Activated B cell treated with CpG ODN at 0.5 μM for 24 hours (primary cell): ENCODE measurements at regions of chr14 and their contacts with region 1.

Region 1: GRCh38 chr14:95662376-95663186 is 23.6 kb upstream of the TCL1B start:
- DNase-seq: no peak
- ATAC-seq: peak; percentile 16
- H3K4me3 Mint-ChIP-seq: peak overlapping the region; percentile 45
- H3K27ac Mint-ChIP-seq: peak overlapping the region; percentile 90
- H3K4me1 Mint-ChIP-seq: peaks cover 92% of the 10 kb centered on the region
- H3K27me3 Mint-ChIP-seq: peaks cover 29% of the 10 kb centered on the region
- CTCF ChIP-seq: no peak

Region 2: GRCh38 chr14:95523815-95524448 is 138.6 kb before region 1 on chr14:
- CTCF ChIA-PET with region 1: no interaction called
- POLR2A ChIA-PET with region 1: no interaction called
- intact Hi-C with region 1: no loop called
- DNase-seq: no peak
- ATAC-seq: no peak
- H3K4me3 Mint-ChIP-seq: no peak overlapping the region
- H3K27ac Mint-ChIP-seq: no peak overlapping the region
- H3K4me1 Mint-ChIP-seq: peaks cover 50% of the 10 kb centered on the region
- H3K27me3 Mint-ChIP-seq: no peaks in the 10 kb centered on the region
- CTCF ChIP-seq: no peak

Region 3: DNA sequence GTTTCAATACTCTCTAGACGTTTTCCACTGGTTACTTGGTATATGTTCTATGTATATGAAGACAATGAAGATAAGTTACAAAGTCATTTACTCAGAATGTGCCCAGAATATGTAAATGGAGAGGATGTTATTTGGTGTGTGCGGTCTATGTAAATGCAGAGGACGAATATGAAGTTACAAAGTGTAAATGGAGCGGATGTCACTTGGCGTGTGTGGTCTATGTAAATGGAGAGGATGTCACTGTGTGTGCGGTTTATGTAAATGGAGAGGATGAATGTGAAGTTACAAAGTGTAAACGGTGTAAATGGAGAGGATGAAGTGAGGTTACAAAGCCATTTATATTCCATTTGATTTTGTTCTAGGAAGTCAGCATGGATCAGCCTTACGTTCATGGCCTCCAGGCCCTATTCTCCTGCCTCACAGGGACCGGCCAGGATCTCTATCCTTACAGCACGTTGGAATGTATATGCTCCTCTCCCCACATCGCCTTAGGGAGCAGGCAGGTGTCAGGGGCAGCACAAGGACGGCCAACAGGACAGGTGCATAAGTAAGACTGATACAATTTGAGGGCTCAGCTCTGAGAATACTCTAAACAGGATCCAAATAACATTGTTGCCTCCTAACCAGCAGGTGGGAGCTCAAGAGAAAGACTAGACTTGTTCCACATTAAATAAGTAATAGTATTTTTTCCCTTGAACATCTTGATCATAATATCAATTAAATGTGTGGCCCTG is 85.3 kb before region 1 on chr14:
- CTCF ChIA-PET with region 1: no interaction called
- POLR2A ChIA-PET with region 1: no interaction called
- intact Hi-C with region 1: loop called (anchors 5 kb)
- DNase-seq: no peak
- ATAC-seq: peak; percentile 95
- H3K4me3 Mint-ChIP-seq: peak overlapping the region; percentile 13
- H3K27ac Mint-ChIP-seq: no peak overlapping the region
- H3K4me1 Mint-ChIP-seq: peaks cover 26% of the 10 kb centered on the region
- H3K27me3 Mint-ChIP-seq: peaks cover 45% of the 10 kb centered on the region
- CTCF ChIP-seq: no peak

Region 4: DNA sequence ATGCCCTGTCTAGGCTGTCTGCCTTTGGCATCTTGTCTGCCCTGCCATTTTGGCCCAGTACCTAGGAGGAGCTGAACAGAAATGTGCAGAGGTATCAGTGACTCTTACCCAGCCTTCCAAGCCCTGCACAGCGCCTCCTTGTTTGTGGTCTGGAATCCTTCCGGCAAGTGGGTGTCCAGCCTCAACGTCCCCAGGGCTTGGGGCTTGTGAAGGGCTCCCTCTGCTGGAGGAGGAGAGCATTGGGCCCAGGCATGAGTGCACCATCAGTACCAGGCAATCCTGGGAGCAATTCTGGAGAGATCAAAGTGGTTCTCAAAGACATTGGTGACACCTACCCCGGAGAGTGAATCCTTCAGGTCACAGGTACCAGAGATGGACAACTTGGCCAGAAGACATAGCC is 21.2 kb after region 1 on chr14:
- CTCF ChIA-PET with region 1: interaction called, 4 read pairs
- POLR2A ChIA-PET with region 1: interaction called, 12 read pairs
- intact Hi-C with region 1: loop called (anchors 2 kb)
- DNase-seq: no peak
- ATAC-seq: no peak
- H3K4me3 Mint-ChIP-seq: no peak overlapping the region
- H3K27ac Mint-ChIP-seq: no peak overlapping the region
- H3K4me1 Mint-ChIP-seq: peaks cover 65% of the 10 kb centered on the region
- H3K27me3 Mint-ChIP-seq: peaks cover 21% of the 10 kb centered on the region
- CTCF ChIP-seq: no peak

Region 5: DNA sequence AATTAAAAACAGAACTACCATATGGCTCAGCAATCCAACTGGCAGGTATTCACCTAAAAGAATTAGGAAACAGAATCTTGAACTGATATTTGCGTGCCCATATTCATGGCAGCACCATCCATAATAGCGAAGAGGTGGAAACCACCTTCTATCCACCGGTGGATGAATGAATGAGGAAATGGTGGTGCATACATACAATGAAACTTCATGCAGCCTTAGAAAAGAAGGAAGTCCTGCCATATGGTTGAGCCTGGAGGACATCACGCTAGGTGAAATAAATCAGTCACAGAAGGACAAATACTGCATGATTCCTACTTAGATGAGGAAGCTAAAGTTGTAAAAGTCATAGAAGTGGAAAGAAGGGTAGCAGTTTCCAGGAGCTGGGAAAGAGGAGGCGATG is 44.7 kb after region 1 on chr14:
- CTCF ChIA-PET with region 1: interaction called, 3 read pairs
- POLR2A ChIA-PET with region 1: interaction called, 15 read pairs
- intact Hi-C with region 1: loop called (anchors 2 kb)
- DNase-seq: no peak
- ATAC-seq: peak; percentile 50
- H3K4me3 Mint-ChIP-seq: peak overlapping the region; percentile 2
- H3K27ac Mint-ChIP-seq: peak overlapping the region; percentile 83
- H3K4me1 Mint-ChIP-seq: peaks cover 86% of the 10 kb centered on the region
- H3K27me3 Mint-ChIP-seq: peaks cover 12% of the 10 kb centered on the region
- CTCF ChIP-seq: no peak

Region 6: DNA sequence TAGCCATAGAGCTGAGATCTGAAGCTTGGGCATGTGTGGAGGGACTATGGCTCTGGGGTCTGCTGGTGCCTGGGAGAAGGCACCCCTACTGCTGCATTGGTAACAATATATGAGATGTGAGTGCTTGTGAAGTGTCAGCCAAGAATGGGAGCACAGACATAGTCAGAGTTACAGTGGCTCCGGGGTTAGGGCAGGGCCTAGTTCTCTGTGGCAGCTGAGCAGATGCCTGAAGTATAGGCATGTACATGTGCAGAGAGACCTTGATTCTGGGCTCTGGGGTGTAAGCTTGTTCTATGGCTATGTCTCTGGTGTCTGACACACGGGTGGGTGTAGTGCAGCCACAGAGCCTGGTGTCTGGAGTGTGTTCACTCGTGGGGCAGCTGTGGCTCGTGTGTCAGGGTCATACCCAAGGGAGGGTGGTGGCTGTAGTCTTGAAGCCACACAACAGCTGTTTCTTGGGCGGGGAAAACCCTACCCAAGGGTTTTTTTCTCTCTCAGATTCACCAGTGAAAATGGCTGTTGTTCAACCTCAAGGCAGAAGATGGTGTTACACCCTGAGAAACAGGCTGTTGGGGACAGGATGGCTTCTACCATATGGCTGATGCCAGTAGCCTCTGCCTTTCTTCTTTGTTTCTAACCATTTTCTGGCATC is 63.2 kb after region 1 on chr14:
- CTCF ChIA-PET with region 1: interaction called, 3 read pairs
- POLR2A ChIA-PET with region 1: interaction called, 6 read pairs
- intact Hi-C with region 1: loop called (anchors 1 kb)
- DNase-seq: no peak
- ATAC-seq: peak; percentile 81
- H3K4me3 Mint-ChIP-seq: peak overlapping the region; percentile 68
- H3K27ac Mint-ChIP-seq: peak overlapping the region; percentile 83
- H3K4me1 Mint-ChIP-seq: peaks cover 80% of the 10 kb centered on the region
- H3K27me3 Mint-ChIP-seq: peaks cover 24% of the 10 kb centered on the region
- CTCF ChIP-seq: no peak

Region 7: DNA sequence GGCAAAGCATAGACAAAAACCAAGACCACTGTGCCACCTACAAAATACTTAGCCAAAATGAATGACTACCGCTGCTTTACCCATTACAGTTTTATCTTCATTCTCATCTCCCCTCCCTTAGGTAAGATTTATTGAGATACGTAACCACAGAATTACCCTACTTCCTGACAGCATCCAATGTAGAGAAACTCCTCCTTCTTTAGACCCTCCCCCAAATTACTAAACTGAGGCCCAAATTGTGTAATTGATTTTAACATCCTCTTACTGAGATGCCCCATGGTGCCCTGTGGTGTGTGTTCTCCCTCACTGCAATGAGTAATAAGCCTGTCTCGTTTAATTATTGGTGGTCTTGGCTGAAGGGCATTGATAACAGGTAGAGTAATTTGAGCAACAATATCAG is 1153.7 kb after region 1 on chr14:
- CTCF ChIA-PET with region 1: no interaction called
- POLR2A ChIA-PET with region 1: no interaction called
- intact Hi-C with region 1: no loop called
- DNase-seq: no peak
- ATAC-seq: no peak
- H3K4me3 Mint-ChIP-seq: no peak overlapping the region
- H3K27ac Mint-ChIP-seq: no peak overlapping the region
- H3K4me1 Mint-ChIP-seq: peaks cover 27% of the 10 kb centered on the region
- H3K27me3 Mint-ChIP-seq: no peaks in the 10 kb centered on the region
- CTCF ChIP-seq: no peak